ENCODE measurements at regions of chr1 and their contacts with region 1.

Region 1: DNA sequence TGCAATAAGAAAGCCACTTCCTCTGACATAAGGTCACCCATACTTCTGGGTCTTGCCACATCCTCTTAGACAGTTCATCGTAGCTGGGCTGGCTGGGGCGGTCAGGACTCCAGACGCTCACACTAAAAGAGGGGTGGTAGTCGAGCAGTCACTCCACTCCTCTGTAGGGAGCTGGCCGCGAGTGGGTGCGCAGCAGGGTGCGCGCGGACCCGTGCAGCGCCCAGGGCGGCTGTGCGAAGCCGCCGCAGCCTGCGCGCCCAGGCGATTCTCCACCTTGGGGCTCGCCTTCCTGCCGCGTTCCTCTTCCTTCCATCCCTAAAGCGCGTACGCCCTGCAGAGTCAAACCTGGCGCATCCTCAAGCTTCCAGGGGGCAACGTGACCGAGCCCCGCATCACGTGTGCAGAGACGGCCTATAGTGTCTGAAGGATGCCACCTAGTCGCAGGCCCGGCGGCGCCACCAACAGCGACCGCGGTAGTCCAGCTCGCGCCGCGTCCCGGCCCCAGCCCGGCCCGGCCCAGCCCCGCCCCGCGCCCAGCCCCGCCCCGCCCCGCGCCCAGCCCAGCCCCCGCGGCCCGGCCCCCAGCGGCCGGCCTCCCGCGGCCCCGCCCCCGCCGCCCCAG is 360 bp upstream of the PRDX6 start:
- DNase-seq: peak; percentile 90
- H3K4me3 Mint-ChIP-seq: peak overlapping the region; percentile 84
- H3K27ac Mint-ChIP-seq: peak overlapping the region; percentile 90
- H3K4me1 Mint-ChIP-seq: peaks cover 53% of the 10 kb centered on the region
- H3K27me3 Mint-ChIP-seq: no peaks in the 10 kb centered on the region

Region 2: DNA sequence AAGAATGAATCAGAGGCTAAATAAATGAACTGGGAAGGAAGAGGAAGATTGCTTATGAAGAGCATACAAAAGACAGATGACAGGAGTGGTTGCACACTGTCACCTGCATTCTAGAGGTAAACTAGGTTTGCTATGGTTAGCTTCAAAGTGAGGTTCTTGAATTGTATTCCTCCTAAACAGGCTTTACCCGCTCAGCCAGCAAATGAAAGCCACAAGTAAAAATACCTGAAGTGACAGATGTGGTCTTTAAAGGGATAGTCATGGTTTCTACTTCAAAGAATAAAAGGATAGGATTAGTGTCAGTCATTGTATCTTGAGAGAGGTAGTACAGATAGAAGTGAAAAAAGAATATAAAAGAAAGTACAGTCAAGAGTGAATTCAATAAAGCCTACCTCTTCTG is 32.0 kb before region 1 on chr1:
- CTCF ChIA-PET with region 1: no interaction called
- POLR2A ChIA-PET with region 1: no interaction called
- intact Hi-C with region 1: no loop called
- DNase-seq: no peak
- H3K4me3 Mint-ChIP-seq: no peak overlapping the region
- H3K27ac Mint-ChIP-seq: no peak overlapping the region
- H3K4me1 Mint-ChIP-seq: peaks cover 18% of the 10 kb centered on the region
- H3K27me3 Mint-ChIP-seq: no peaks in the 10 kb centered on the region

Region 3: DNA sequence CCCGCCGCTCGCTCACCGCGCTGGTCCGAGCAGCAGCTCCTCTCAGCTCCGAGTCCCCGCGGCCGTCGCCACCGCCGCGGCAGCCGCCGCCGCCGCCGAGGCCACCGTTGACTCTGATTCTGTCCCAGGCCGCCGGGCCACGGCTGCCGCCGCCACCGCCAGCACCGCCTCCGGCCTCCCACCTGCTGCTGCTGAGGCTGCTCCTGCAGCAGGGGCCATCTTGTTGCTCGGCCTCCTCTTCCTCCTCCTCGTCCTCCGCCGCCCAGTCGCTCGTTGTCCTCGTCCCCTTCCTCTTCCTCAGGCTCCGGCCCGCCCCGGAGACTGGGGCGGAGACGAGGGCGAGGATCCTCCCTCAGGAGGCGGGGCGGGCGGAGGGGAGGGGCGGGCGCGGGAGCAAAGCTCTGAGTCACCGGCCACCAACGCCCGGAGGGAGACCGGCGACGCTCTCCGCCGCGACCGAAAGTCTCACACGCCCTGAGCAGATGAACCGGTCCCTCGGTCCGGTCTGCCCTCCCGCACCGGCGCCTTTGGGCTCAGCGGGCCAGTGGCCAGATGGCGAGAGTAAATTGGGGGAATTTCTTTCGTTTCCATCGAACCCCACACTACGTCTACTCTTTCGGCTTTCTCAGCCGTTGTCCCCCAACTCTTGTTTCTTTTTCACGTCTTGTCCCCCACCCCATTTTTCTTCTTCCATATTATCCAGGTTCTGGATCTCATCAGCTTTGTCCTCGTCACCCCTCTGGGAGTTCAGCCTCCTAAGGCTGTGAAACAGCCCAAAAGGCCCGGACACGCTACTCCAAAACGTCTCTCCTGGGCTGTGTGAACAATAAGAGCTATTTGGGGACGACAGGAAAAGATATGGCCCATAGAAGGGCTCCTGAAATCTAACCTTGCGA is 545.6 kb after region 1 on chr1 and contains the start of gene RC3H1:
- CTCF ChIA-PET with region 1: no interaction called
- POLR2A ChIA-PET with region 1: no interaction called
- intact Hi-C with region 1: loop called (anchors 1 kb)
- DNase-seq: peak; percentile 94
- H3K4me3 Mint-ChIP-seq: peak within 1 kb of the TSS; percentile 97
- H3K27ac Mint-ChIP-seq: peak within 1 kb of the TSS; percentile 93
- H3K4me1 Mint-ChIP-seq: peaks cover 38% of the 10 kb centered on the region
- H3K27me3 Mint-ChIP-seq: no peaks in the 10 kb centered on the region
- total RNA-seq, gene RC3H1: 26.6 to 26.8 TPM